A673 (cell line): ENCODE measurements at regions of chr10 and their contacts with region 1.

Region 1: GRCh38 chr10:132793871-132794849 is 8.2 kb upstream of the NKX6-2 start:
- DNase-seq: peak; percentile 90
- H3K4me3 ChIP-seq: no peak overlapping the region
- H3K27ac ChIP-seq: no peak overlapping the region
- H3K4me1 ChIP-seq: peaks cover 13% of the 10 kb centered on the region
- H3K27me3 ChIP-seq: peaks cover 61% of the 10 kb centered on the region
- CTCF ChIP-seq: peak; percentile 49

Region 2: DNA sequence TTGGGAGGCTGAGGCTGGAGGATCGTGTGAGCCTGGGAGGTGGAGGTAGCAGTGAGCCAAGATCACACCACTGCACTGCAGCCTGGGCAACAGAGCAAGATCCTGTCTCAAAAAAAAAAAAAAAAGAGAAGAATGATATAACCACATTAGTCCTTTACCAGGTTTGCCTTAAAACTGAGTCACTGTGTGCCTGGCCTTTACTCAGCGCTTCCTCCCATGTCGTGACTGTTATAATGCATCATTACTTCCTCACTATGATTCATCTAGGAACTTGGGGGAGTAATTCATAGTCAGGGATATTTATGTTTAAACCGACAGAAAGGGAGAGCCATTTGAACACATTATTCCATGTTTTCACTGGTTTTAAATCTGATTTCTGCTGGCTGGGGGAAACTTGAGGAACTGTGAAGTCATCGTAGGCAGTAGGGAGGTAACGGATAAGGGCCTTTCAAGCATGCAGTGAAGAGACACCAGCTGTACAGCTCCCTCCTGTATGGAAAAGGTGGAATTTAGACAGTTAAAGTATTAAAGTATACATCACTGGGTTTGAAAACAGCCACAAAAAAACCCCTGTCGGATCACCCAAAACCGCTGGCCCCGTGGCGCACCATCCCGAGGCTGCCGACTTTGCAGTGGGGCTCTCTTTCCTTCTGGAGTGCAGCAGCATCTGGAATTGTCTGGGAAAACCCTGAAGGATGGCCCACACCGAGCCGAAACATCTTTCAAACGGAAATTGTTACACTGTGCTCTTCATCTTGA is 128.0 kb before region 1 on chr10:
- CTCF ChIA-PET with region 1: no interaction called
- POLR2A ChIA-PET with region 1: no interaction called
- intact Hi-C with region 1: loop called (anchors 10 kb)
- DNase-seq: peak; percentile 26
- H3K4me3 ChIP-seq: no peak overlapping the region
- H3K27ac ChIP-seq: no peak overlapping the region
- H3K4me1 ChIP-seq: peaks cover 25% of the 10 kb centered on the region
- H3K27me3 ChIP-seq: peaks cover 5% of the 10 kb centered on the region
- CTCF ChIP-seq: no peak

Region 3: GRCh38 chr10:133214468-133215410 is 420.6 kb after region 1 on chr10:
- CTCF ChIA-PET with region 1: no interaction called
- POLR2A ChIA-PET with region 1: no interaction called
- intact Hi-C with region 1: no loop called
- DNase-seq: no peak
- H3K4me3 ChIP-seq: no peak overlapping the region
- H3K27ac ChIP-seq: no peak overlapping the region
- H3K4me1 ChIP-seq: no peaks in the 10 kb centered on the region
- H3K27me3 ChIP-seq: peaks cover 44% of the 10 kb centered on the region
- CTCF ChIP-seq: no peak